ENCODE measurements at regions of chr1 and their contacts with region 1.

Region 1: DNA sequence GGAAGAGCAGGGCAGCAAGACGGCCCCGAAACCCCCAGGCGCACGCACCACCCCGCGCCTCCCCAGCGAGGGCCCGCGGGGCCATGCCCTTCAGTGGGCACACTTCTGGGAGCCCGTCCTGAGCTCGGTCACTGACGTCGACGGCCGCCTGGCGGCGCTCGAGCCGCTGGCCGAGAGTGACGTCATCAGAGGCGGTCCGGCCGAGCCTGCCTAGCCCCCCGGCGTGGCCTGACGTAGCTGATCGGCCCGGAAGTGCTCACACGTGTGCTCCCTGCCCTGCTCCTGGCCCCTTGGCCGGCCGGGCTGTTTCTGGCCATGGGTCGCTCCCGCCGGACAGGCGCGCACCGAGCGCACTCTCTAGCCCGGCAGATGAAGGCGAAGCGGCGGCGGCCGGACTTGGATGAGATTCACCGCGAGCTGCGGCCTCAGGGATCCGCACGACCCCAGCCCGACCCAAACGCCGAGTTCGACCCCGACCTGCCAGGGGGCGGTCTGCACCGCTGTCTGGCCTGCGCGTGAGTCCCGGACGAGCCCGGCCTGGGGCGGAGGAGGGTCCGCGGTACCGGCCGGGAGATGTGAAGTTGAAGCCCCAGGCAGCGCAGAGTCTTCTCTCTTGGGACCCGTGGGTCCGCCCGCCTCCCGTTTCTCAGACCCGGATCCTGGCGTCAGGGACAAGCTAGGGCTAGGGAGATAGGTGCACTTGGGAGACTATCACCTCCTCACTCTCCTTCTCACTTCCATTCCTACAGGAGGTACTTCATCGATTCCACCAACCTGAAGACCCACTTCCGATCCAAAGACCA is at the start of gene ZNF593:
- DNase-seq: peak; percentile 62
- H3K4me3 ChIP-seq: peak within 1 kb of the TSS; percentile 87
- H3K27ac ChIP-seq: peak within 1 kb of the TSS; percentile 52
- H3K27me3 ChIP-seq: peaks cover 5% of the 10 kb centered on the region
- CTCF ChIP-seq: peak; percentile 83
- polyA plus RNA-seq, gene ZNF593: 19.7 and 28.6 TPM in 2 replicates

Region 2: DNA sequence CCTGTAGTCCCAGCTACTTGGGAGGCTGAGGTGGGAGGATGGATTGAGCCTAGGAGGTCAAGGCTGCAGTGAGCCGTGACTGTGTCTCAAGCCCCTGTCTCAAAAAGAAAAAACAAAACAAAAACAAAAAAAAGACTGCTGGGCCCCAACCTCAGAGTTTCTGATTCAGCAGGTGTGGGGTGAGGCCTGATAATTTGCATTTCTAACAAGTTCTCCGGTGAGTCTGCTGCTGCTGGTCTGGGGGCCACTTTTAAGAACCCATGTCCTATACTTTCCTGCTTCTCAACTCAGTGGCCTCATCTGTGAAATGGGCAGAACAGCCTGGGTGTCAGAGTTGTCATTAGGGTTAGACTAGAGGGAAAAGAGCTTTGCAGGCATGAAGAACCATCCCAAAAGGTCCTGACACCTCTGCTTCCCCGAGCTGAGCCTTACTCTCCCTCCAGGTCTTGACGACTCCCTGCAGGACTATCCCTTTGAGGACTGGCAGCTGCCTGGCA is 10.2 kb after region 1 on chr1:
- CTCF ChIA-PET with region 1: interaction called, 10 read pairs
- POLR2A ChIA-PET with region 1: no interaction called
- DNase-seq: no peak
- H3K4me3 ChIP-seq: no peak overlapping the region
- H3K27ac ChIP-seq: no peak overlapping the region
- H3K27me3 ChIP-seq: peaks cover 8% of the 10 kb centered on the region
- CTCF ChIP-seq: no peak